H1 (cell line): ENCODE measurements at regions of chr1 and their contacts with region 1.

Region 1: DNA sequence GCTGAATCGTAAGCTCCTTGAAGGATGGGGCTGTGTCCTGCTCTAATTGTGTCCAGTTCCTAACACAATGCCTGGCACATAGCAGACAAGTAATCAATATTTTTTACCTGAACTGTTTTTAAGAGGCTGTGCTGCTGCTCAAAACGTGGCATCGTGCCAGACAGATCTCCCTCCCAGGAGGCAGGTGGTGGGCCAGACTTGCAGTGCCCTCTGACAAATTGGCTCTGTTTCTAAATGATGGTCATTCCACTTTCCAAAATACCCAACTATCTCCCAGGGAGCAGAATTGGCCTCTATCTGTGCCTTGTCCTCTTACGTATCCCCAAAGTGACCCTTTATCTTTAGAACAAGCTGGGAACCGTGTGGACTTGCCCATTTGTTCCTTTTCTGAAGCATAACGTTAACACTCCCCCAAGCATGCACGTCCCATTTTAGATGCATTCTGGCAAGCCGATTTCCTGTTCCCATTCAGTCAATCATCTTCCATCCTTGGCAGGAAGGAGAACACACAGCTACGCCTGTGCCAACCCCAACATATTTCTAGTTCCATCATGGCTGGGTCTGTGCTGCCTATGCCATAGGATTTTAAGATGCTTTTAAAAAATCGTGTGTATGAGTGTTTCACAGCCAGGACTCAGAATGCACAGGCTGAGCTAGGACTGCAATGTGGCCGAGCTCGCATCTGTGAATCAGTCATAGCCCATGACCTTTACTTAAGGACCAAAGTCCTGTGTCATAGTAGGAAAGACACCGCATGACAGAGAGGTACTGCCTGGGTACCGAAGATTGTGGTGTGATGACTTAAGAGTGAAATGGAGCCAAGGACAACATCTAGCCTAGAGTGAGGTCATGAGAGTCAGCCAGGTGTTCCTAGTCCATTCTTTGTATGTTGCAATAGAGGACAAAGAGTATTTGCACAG is 408.6 kb downstream of the PRDM2 start:
- DNase-seq: no peak
- H3K4me3 ChIP-seq: no peak overlapping the region
- H3K27ac ChIP-seq: no peak overlapping the region
- H3K4me1 ChIP-seq: no peaks in the 10 kb centered on the region
- H3K27me3 ChIP-seq: no peaks in the 10 kb centered on the region
- CTCF ChIP-seq: no peak
- EP300 ChIP-seq: no peak
- POLR2A ChIP-seq: no peak
- RAD21 ChIP-seq: no peak

Region 2: DNA sequence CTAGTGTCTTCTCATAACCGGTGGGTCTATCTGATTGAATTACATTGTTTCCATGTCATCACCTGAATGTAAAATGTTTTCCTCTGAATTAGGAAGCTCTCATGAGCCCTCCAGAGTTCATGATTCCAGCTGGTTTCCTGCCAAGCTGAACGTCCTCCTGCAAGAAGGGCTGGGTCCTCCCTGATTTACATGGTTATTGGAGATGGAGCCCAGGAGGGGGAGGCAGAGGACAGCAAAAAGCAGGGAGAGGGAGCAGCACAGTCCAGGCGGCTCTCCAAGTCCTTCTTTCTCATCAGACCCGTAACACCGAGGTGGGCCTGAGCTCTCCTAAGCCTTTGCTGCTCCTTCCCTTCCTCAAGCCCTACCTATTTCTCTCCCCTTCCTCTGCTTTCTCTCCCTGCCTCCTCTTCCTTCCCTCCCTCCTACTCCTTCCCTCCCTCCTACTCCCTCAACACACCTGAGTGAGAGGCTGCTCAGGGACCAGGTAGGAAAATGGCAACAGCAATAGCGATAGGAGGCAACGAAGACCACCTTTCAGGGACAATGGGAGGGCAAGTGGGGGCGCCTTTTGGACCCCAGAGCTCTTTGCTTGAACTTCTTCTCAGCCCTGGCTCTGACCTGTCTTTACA is 142.7 kb before region 1 on chr1:
- CTCF ChIA-PET with region 1: interaction called, 13 read pairs
- POLR2A ChIA-PET with region 1: no interaction called
- DNase-seq: peak; percentile 33 to 61
- H3K4me3 ChIP-seq: no peak overlapping the region
- H3K27ac ChIP-seq: no peak overlapping the region
- H3K4me1 ChIP-seq: no peaks in the 10 kb centered on the region; a peak in 1 of 7 replicates
- H3K27me3 ChIP-seq: no peaks in the 10 kb centered on the region
- CTCF ChIP-seq: peak; percentile 75 to 89 (median 86)
- EP300 ChIP-seq: no peak
- POLR2A ChIP-seq: no peak
- RAD21 ChIP-seq: peak; percentile 97

Region 3: DNA sequence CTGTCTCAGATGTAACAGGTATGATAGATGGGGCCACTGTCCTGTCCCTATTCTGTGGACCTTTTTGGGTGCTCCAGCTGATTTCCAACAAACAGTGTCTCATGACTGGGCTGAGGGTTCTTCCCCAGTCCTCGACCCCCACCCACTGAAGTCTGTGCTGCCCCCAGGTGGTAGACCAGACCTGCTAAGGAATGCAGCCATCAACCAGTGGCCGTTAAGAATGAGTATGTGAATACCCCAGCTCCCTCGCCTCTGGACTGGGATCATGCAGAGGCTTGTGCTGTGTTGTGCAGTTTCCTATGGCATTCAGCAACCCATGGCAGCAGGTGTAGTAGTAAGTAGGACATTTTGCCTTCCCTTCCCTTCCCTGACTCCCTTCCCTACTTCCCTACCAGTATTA is 306.8 kb after region 1 on chr1:
- CTCF ChIA-PET with region 1: interaction called, 14 read pairs
- POLR2A ChIA-PET with region 1: no interaction called
- DNase-seq: peak in 1 of 2 experiments; percentile 69
- H3K4me3 ChIP-seq: no peak overlapping the region
- H3K27ac ChIP-seq: no peak overlapping the region
- H3K4me1 ChIP-seq: peaks cover 0 to 4% (median 1%) of the 10 kb centered on the region in 4 experiments; a peak in 3 of 7 replicates
- H3K27me3 ChIP-seq: no peaks in the 10 kb centered on the region
- CTCF ChIP-seq: peak; percentile 69 to 80 (median 72)
- EP300 ChIP-seq: no peak
- POLR2A ChIP-seq: no peak
- RAD21 ChIP-seq: peak; percentile 69 to 82

Region 4: DNA sequence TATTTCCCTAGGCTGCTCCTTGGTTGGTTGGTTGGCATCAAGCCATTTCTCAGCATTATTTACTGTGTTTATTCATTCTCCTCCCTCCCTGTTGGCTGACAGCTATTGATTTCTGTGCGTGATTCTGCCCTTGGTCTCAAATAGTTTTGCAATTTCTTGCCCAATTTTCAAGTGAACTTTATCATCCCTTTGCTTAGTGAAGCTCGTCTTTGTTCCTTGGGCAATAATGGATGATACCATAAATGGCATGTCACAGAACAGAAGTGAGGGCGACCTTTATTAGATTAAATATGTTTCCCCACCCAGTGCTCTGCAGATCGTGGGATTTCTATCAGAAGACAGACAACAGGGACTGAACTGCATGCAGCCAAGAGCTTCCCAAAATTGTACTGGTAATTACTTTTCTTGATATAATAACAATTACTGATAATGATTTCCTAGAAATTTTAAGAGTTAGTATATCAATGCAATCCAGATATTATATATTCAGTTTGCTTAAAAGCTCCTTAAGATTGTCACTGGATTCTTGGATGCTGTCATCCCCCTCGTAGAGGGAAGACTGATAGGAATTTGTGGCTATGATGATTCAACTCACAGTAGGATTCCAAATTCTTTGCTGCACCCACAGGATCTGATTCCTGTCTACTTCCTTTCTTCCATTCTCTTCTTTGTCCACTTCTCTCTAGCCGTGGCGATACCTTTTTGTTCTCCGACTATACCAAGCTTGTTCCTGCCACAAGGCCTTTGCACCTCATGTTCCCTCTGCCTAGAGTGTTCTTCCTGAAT is 367.7 kb after region 1 on chr1:
- CTCF ChIA-PET with region 1: no interaction called
- POLR2A ChIA-PET with region 1: no interaction called
- DNase-seq: no peak
- H3K4me3 ChIP-seq: no peak overlapping the region
- H3K27ac ChIP-seq: no peak overlapping the region
- H3K4me1 ChIP-seq: no peaks in the 10 kb centered on the region
- H3K27me3 ChIP-seq: no peaks in the 10 kb centered on the region
- CTCF ChIP-seq: no peak
- EP300 ChIP-seq: no peak
- POLR2A ChIP-seq: no peak
- RAD21 ChIP-seq: no peak